CD4-positive, alpha-beta memory T cell (primary cell): ENCODE measurements at regions of chr17 and their contacts with region 1.

Region 1: GRCh38 chr17:58417300-58418092 is at the start of gene RNF43:
- DNase-seq: peak; percentile 85 to 96 (median 89)
- H3K4me3 ChIP-seq: no peak within 1 kb of the TSS
- H3K4me3 Mint-ChIP-seq: peak within 1 kb of the TSS in 2 of 8 donors; percentile 38 to 39
- H3K27ac ChIP-seq: peak within 1 kb of the TSS; percentile 4
- H3K27ac Mint-ChIP-seq: peak within 1 kb of the TSS in 6 of 7 donors; percentile 42 to 77 (median 69)
- H3K4me1 ChIP-seq: peaks cover 15% of the 10 kb centered on the region
- H3K4me1 Mint-ChIP-seq: peaks cover 7 to 15% (median 9%) of the 10 kb centered on the region in 4 donors
- H3K27me3 ChIP-seq: no peaks in the 10 kb centered on the region
- H3K27me3 Mint-ChIP-seq: no peaks in the 10 kb centered on the region
- total RNA-seq, gene RNF43: 1.2 to 1.6 TPM

Region 2: DNA sequence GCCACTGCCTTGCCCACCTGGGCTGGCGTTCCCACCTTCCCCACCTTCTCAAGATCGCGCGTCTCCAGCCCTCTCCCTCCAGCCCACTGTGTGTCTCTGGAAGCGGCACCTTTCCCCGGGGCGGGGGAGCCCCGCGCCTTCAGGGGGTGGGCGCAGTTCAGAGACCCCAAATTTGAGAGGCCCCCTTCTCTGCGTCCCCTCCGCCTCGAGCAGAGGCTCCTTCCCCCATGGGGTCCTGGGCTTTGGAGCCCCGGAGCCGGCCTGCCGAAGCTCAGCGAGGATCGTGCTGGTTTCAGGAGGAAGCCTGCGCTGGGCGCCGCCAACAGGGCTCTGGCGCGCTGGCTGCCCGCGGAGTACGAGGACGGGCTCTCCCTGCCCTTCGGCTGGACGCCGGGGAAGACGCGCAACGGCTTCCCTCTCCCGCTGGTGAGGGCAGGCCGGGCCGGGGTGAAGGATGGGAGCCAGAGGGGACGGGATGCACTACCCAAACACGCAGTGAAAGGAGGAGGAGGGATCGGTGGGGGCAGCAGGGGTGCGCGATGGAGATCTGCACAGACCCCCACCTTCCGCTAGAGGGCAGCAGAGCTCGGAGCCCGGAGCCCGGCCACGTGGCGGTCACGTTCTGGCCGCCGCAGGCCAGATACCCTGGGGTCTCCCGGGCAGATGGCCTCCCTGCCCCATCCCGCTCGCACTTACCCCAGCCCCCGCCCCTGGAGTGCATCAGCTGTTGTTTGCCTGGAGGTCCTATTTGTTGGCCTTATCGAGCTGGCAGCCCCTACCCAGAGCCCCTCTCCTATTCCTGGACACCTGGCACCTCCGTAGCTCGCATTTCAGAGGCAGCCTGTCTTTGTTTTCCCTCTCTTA is 168.0 kb before region 1 on chr17:
- CTCF ChIA-PET with region 1: interaction called, 4 read pairs
- POLR2A ChIA-PET with region 1: no interaction called
- intact Hi-C with region 1: loop called (anchors 1 kb)
- DNase-seq: peak; percentile 69 to 80 (median 73)
- H3K4me3 ChIP-seq: peak overlapping the region in 1 of 2 donors; percentile 62
- H3K4me3 Mint-ChIP-seq: peak overlapping the region; percentile 70 to 86 (median 80)
- H3K27ac ChIP-seq: no peak overlapping the region
- H3K27ac Mint-ChIP-seq: peak overlapping the region in 2 of 7 donors; percentile 2 to 18
- H3K4me1 ChIP-seq: peaks cover 11% of the 10 kb centered on the region
- H3K4me1 Mint-ChIP-seq: peaks cover 3 to 9% (median 6%) of the 10 kb centered on the region in 4 donors
- H3K27me3 ChIP-seq: no peaks in the 10 kb centered on the region
- H3K27me3 Mint-ChIP-seq: peaks cover 1 to 5% of the 10 kb centered on the region in 2 donors

Region 3: GRCh38 chr17:58303971-58304725 is 113.3 kb before region 1 on chr17:
- CTCF ChIA-PET with region 1: interaction called, 27 read pairs
- POLR2A ChIA-PET with region 1: no interaction called
- intact Hi-C with region 1: loop called (anchors 1 kb)
- DNase-seq: peak in 4 of 5 donors; percentile 59 to 65 (median 62)
- H3K4me3 ChIP-seq: no peak overlapping the region
- H3K4me3 Mint-ChIP-seq: no peak overlapping the region
- H3K27ac ChIP-seq: no peak overlapping the region
- H3K27ac Mint-ChIP-seq: peak overlapping the region in 4 of 7 donors; percentile 0 to 70 (median 44)
- H3K4me1 ChIP-seq: peaks cover 4% of the 10 kb centered on the region
- H3K4me1 Mint-ChIP-seq: peaks cover 4 to 10% (median 5%) of the 10 kb centered on the region in 4 donors
- H3K27me3 ChIP-seq: no peaks in the 10 kb centered on the region
- H3K27me3 Mint-ChIP-seq: no peaks in the 10 kb centered on the region

Region 4: DNA sequence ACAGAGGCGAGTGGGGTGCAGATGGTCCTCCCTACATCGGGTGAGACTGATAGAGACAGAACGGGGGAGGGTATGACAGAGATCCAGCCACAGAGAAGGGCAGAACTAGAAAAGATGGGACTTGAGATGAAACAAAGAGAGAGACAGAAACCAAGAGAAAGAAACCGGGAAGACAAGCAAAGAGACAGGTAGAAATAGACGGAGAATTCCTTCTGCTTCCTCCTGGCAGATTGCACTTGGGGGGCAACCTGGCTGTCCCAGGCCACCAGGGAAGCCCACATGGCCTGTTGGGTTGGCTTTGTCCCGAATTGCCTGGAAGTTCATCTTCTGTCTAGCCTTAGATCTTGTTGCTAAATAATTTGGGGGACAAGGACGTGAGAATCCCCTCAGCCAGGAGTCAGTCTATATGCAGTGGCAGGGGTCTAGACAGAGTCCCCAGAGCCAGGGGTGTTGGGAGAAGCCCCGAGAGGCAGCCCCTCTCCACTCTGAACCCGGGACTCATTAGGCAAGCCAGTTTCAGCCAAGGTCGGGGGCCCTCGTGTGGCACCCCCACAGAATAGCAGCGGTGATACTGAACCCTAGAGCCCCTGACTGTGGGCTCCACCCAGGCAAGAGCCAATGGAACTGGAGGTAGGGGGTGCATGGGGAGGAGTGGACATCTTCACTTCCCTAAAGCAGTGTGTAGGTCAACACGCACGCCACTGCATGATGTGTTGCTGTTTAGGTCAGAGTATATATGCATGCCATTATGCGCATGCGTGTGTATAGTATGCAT is 88.3 kb before region 1 on chr17:
- CTCF ChIA-PET with region 1: interaction called, 5 read pairs
- POLR2A ChIA-PET with region 1: interaction called, 43 read pairs
- intact Hi-C with region 1: loop called (anchors 1 kb)
- DNase-seq: peak; percentile 67 to 79 (median 73)
- H3K4me3 ChIP-seq: peak overlapping the region; percentile 82 to 99
- H3K4me3 Mint-ChIP-seq: peak overlapping the region; percentile 88 to 99 (median 98)
- H3K27ac ChIP-seq: peak overlapping the region; percentile 97
- H3K27ac Mint-ChIP-seq: peak overlapping the region; percentile 93 to 99 (median 97)
- H3K4me1 ChIP-seq: peaks cover 47% of the 10 kb centered on the region
- H3K4me1 Mint-ChIP-seq: peaks cover 25 to 72% (median 36%) of the 10 kb centered on the region in 4 donors
- H3K27me3 ChIP-seq: no peaks in the 10 kb centered on the region
- H3K27me3 Mint-ChIP-seq: no peaks in the 10 kb centered on the region

Region 5: GRCh38 chr17:58344047-58344790 is 73.3 kb before region 1 on chr17:
- CTCF ChIA-PET with region 1: interaction called, 56 read pairs
- POLR2A ChIA-PET with region 1: interaction called, 43 read pairs
- intact Hi-C with region 1: loop called (anchors 1 kb)
- DNase-seq: peak; percentile 86 to 99 (median 90)
- H3K4me3 ChIP-seq: peak overlapping the region; percentile 59 to 99
- H3K4me3 Mint-ChIP-seq: peak overlapping the region; percentile 86 to 99 (median 90)
- H3K27ac ChIP-seq: peak overlapping the region; percentile 97
- H3K27ac Mint-ChIP-seq: peak overlapping the region; percentile 92 to 99 (median 94)
- H3K4me1 ChIP-seq: peaks cover 97% of the 10 kb centered on the region
- H3K4me1 Mint-ChIP-seq: peaks cover 55 to 98% (median 75%) of the 10 kb centered on the region in 4 donors
- H3K27me3 ChIP-seq: no peaks in the 10 kb centered on the region
- H3K27me3 Mint-ChIP-seq: no peaks in the 10 kb centered on the region

Region 6: GRCh38 chr17:58357297-58357993 is 60.1 kb before region 1 on chr17:
- CTCF ChIA-PET with region 1: interaction called, 29 read pairs
- POLR2A ChIA-PET with region 1: interaction called, 34 read pairs
- intact Hi-C with region 1: loop called (anchors 1 kb)
- DNase-seq: no peak
- H3K4me3 ChIP-seq: no peak overlapping the region
- H3K4me3 Mint-ChIP-seq: no peak overlapping the region
- H3K27ac ChIP-seq: no peak overlapping the region
- H3K27ac Mint-ChIP-seq: peak overlapping the region in 2 of 7 donors; percentile 32 to 59
- H3K4me1 ChIP-seq: peaks cover 20% of the 10 kb centered on the region
- H3K4me1 Mint-ChIP-seq: peaks cover 11 to 24% (median 21%) of the 10 kb centered on the region in 4 donors
- H3K27me3 ChIP-seq: no peaks in the 10 kb centered on the region
- H3K27me3 Mint-ChIP-seq: no peaks in the 10 kb centered on the region

Region 7: DNA sequence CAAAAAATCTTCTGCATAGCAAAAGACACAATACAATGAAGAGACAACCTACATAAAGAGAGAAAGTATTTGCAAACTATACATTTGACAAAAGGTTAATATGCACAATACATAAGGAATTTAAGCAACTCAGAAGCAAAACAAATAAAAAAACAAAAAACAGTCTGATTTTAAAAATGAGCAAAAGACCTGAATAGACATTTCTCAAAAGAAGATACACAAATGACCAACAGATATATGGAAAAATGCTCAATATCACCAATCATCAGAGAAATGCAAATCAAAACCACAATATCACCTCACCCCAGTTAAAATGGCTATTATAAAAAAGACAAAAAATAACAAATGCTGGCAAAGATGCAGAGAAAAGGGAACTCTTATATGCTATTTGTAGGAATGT is 38.0 kb after region 1 on chr17:
- CTCF ChIA-PET with region 1: no interaction called
- POLR2A ChIA-PET with region 1: no interaction called
- intact Hi-C with region 1: no loop called
- DNase-seq: no peak
- H3K4me3 ChIP-seq: no peak overlapping the region
- H3K4me3 Mint-ChIP-seq: no peak overlapping the region
- H3K27ac ChIP-seq: no peak overlapping the region
- H3K27ac Mint-ChIP-seq: no peak overlapping the region
- H3K4me1 ChIP-seq: no peaks in the 10 kb centered on the region
- H3K4me1 Mint-ChIP-seq: no peaks in the 10 kb centered on the region
- H3K27me3 ChIP-seq: no peaks in the 10 kb centered on the region
- H3K27me3 Mint-ChIP-seq: no peaks in the 10 kb centered on the region

Region 8: GRCh38 chr17:58476812-58477211 is 59.3 kb after region 1 on chr17:
- CTCF ChIA-PET with region 1: no interaction called
- POLR2A ChIA-PET with region 1: no interaction called
- intact Hi-C with region 1: no loop called
- DNase-seq: no peak
- H3K4me3 ChIP-seq: no peak overlapping the region
- H3K4me3 Mint-ChIP-seq: no peak overlapping the region
- H3K27ac ChIP-seq: no peak overlapping the region
- H3K27ac Mint-ChIP-seq: no peak overlapping the region
- H3K4me1 ChIP-seq: no peaks in the 10 kb centered on the region
- H3K4me1 Mint-ChIP-seq: peaks cover 0 to 1% (median 0%) of the 10 kb centered on the region in 4 donors
- H3K27me3 ChIP-seq: no peaks in the 10 kb centered on the region
- H3K27me3 Mint-ChIP-seq: no peaks in the 10 kb centered on the region